Right ventricle myocardium superior (tissue), 1 donor: ENCODE measurements at regions of chr1 and their contacts with region 1.

Region 1: GRCh38 chr1:27116697-27117096 is 38.2 kb downstream of the SLC9A1 start:
- DNase-seq: no peak
- ATAC-seq: no peak

Region 2: GRCh38 chr1:27154991-27155781 is 38.5 kb after region 1 on chr1 and contains the start of gene SLC9A1:
- intact Hi-C with region 1: loop called (anchors 5 kb)
- DNase-seq: peak; percentile 97
- ATAC-seq: peak; percentile 85
- total RNA-seq, gene SLC9A1: 17.6 TPM

Region 3: DNA sequence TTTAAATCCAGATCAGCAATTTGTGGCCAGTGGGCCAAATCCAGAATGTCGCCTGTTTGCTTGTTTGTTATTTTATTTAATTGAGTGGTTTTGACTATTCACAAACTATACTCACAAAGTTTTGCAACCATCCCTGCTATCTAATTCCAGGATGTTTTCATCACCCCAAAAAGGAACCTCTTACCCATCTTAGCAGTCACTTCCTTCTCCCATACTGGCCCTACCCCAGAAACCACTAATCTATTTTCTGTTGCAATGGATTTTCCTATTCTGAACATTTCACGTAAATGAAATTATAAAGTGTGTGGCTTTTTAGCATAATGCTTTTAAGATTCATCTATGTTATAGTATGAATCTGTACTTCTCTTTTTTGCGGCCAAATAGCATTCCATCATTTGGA is 159.0 kb after region 1 on chr1:
- intact Hi-C with region 1: no loop called
- DNase-seq: no peak
- ATAC-seq: no peak